Caco-2 (cell line): ENCODE measurements at regions of chr4 and their contacts with region 1.

Region 1: GRCh38 chr4:86895692-86896488 is 3.7 kb upstream of the C4orf36 start:
- DNase-seq: peak in 1 of 2 experiments; percentile 61
- H3K4me3 ChIP-seq: no peak overlapping the region
- H3K4me3 Mint-ChIP-seq: no peak overlapping the region
- H3K27ac Mint-ChIP-seq: no peak overlapping the region
- H3K4me1 ChIP-seq: no peaks in the 10 kb centered on the region
- H3K4me1 Mint-ChIP-seq: peaks cover 6% of the 10 kb centered on the region
- H3K27me3 ChIP-seq: no peaks in the 10 kb centered on the region
- H3K27me3 Mint-ChIP-seq: no peaks in the 10 kb centered on the region
- CTCF ChIP-seq: peak; percentile 52 to 59

Region 2: DNA sequence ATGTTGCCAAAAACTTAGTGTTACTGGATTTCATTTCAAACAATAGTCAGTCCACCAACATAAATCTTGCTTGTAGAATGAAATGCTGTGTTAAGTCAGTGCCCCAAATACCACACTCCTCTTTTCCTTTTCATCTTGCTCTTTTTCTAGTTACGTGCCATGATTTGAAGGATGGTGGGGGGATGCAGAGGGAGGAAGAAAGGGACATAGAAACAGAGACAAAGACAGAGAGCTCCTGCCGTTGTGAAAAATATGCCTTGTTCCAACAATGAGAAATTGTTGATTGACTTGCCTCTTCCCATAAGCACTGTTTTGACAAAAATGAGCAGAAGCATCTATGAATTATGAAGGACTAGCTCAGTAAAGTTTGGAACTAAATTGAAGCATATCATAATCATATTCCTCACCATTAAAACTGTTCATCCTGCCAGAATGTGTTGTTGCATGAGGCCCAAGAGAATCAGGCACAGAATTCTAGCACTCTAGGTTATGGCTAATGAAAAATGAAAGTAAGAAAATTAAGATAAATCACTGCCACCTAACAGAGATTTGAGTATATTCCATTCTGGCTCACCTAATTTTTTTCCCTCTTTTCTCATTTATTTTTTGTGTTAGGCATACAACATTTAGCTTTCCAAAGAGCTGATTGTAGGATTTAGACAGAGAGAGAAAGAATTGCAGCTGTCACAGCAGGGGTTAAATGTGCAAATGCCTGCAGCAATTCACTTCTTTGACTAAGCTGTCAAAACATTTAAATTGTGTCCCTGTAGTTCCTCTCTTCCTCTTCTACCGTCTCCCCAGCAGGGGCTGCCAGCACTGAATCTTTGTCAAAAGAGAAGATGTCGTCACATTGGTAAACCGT is 413.3 kb before region 1 on chr4:
- CTCF ChIA-PET with region 1: no interaction called
- POLR2A ChIA-PET with region 1: no interaction called
- intact Hi-C with region 1: no loop called
- DNase-seq: peak in 1 of 2 experiments; percentile 3
- H3K4me3 ChIP-seq: no peak overlapping the region
- H3K4me3 Mint-ChIP-seq: no peak overlapping the region
- H3K27ac Mint-ChIP-seq: no peak overlapping the region
- H3K4me1 ChIP-seq: no peaks in the 10 kb centered on the region
- H3K4me1 Mint-ChIP-seq: no peaks in the 10 kb centered on the region
- H3K27me3 ChIP-seq: no peaks in the 10 kb centered on the region
- H3K27me3 Mint-ChIP-seq: peaks cover 4% of the 10 kb centered on the region
- CTCF ChIP-seq: peak in 1 of 2 experiments; percentile 32

Region 3: DNA sequence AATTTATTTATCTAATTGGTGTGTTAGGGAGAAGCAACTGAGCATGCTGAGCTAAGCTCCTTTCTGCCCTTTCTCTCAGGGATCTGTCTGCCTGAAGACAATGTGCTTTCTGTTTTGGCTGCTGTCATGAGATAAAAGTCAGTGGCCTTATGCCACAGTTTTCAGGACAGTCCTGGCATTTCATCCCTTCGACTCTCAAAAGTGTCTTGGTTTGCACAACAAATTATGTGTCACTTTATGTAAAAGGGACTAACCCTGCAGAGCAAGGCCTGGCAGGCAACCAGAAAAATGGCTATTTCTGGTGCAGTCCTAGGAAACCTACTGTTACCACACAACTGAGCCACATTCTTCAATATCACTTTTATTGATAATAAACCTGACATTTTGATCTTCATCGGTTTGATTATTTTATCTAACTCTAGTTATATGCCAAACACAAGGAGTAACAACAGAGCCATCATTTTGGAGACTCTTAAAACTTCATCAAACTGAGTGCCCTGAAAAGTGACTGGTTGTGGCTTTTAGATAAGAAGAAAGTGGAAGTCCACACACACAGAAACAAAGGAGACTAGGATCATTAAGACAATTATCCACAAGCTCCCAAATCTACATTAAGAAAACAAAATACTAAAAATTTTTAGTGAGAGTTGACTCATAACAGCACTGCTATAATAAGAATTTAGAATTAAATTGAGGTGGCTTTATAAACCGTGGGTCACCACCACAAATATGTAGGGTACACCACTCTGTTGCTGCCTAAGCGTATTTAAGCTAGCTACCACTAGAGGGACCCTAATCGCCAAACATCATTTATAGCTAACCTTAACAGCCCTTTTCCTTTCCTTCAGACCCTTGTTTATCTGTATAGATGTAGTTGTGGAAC is 397.7 kb before region 1 on chr4:
- CTCF ChIA-PET with region 1: interaction called, 10 read pairs
- POLR2A ChIA-PET with region 1: no interaction called
- intact Hi-C with region 1: loop called (anchors 1 kb)
- DNase-seq: peak in 1 of 2 experiments; percentile 35
- H3K4me3 ChIP-seq: no peak overlapping the region
- H3K4me3 Mint-ChIP-seq: no peak overlapping the region
- H3K27ac Mint-ChIP-seq: no peak overlapping the region
- H3K4me1 ChIP-seq: peaks cover 5% of the 10 kb centered on the region; the same call in 1 of the 2 replicates
- H3K4me1 Mint-ChIP-seq: peaks cover 7% of the 10 kb centered on the region
- H3K27me3 ChIP-seq: no peaks in the 10 kb centered on the region
- H3K27me3 Mint-ChIP-seq: no peaks in the 10 kb centered on the region
- CTCF ChIP-seq: peak; percentile 71 to 75

Region 4: GRCh38 chr4:86653237-86653865 is 242.5 kb before region 1 on chr4:
- CTCF ChIA-PET with region 1: no interaction called
- POLR2A ChIA-PET with region 1: no interaction called
- intact Hi-C with region 1: loop called (anchors 1 kb)
- DNase-seq: peak in 1 of 2 experiments; percentile 32
- H3K4me3 ChIP-seq: no peak overlapping the region
- H3K4me3 Mint-ChIP-seq: no peak overlapping the region
- H3K27ac Mint-ChIP-seq: no peak overlapping the region
- H3K4me1 ChIP-seq: no peaks in the 10 kb centered on the region
- H3K4me1 Mint-ChIP-seq: no peaks in the 10 kb centered on the region
- H3K27me3 ChIP-seq: no peaks in the 10 kb centered on the region
- H3K27me3 Mint-ChIP-seq: no peaks in the 10 kb centered on the region
- CTCF ChIP-seq: peak; percentile 7 to 31

Region 5: DNA sequence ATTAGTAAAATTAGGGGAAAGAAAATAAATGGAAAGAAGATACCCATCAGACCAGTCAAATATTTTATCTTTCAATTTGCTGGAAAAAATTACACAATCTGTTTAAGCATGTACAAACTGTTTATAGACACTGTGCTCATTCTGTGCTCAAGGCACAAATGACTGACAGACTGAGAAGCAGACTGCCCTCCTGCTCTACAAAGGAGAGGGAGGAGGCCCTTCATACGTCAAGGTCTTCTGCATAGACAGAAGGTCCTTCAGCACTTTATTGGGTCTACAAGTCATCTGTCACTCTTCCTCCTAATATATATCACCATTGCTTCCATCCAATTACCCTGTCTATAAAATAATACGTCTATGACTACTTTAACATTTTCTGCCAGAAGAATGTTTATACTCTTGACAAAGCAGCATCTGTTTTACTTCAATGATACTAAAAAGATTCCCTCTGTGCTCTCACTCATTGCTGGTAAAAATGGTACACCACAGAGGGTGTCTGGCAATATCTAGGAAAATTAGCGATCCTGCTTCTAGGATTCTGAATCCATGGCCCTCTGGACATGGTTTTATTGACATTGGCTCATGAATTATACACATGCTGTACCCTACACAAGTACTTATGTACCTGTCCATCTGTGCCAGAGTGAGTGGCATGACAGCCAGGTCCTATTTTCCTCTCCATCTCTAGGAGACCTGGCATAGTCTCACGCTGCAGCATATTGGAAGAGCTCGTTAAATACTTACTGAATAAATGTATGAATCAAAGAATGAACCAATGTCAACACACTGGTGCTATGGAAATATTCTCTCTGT is 58.0 kb before region 1 on chr4:
- CTCF ChIA-PET with region 1: no interaction called
- POLR2A ChIA-PET with region 1: no interaction called
- intact Hi-C with region 1: no loop called
- DNase-seq: no peak
- H3K4me3 ChIP-seq: no peak overlapping the region
- H3K4me3 Mint-ChIP-seq: no peak overlapping the region
- H3K27ac Mint-ChIP-seq: no peak overlapping the region
- H3K4me1 ChIP-seq: no peaks in the 10 kb centered on the region
- H3K4me1 Mint-ChIP-seq: no peaks in the 10 kb centered on the region
- H3K27me3 ChIP-seq: no peaks in the 10 kb centered on the region
- H3K27me3 Mint-ChIP-seq: no peaks in the 10 kb centered on the region
- CTCF ChIP-seq: no peak

Region 6: DNA sequence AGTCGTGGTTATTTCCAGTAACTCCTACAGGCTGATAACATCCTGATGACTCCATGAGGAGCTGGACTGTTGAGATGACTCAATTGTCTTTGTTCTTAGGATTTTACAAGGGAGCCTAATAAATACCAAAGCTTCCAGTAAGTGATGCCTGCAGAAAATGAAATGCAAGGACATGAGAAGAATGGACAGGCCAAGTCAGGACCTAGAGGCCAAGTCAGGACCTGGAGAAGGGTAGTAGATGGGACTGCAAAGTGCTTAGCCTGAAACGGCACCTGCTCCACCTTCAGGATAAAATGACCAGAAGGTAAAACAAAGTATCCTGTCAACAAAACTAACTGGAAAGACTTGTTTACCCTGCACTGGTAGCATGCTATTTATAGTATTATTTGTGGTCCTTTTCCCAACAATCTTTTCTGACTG is 40.3 kb before region 1 on chr4:
- CTCF ChIA-PET with region 1: no interaction called
- POLR2A ChIA-PET with region 1: no interaction called
- intact Hi-C with region 1: loop called (anchors 5 kb)
- DNase-seq: peak in 1 of 2 experiments; percentile 30
- H3K4me3 ChIP-seq: no peak overlapping the region
- H3K4me3 Mint-ChIP-seq: no peak overlapping the region
- H3K27ac Mint-ChIP-seq: no peak overlapping the region
- H3K4me1 ChIP-seq: peaks cover 10% of the 10 kb centered on the region
- H3K4me1 Mint-ChIP-seq: peaks cover 7% of the 10 kb centered on the region
- H3K27me3 ChIP-seq: no peaks in the 10 kb centered on the region
- H3K27me3 Mint-ChIP-seq: no peaks in the 10 kb centered on the region
- CTCF ChIP-seq: no peak

Region 7: GRCh38 chr4:87150498-87151261 is 254.8 kb after region 1 on chr4:
- CTCF ChIA-PET with region 1: no interaction called
- POLR2A ChIA-PET with region 1: no interaction called
- intact Hi-C with region 1: loop called (anchors 1 kb)
- DNase-seq: peak; percentile 42 to 75
- H3K4me3 ChIP-seq: no peak overlapping the region
- H3K4me3 Mint-ChIP-seq: peak overlapping the region; percentile 19
- H3K27ac Mint-ChIP-seq: peak overlapping the region; percentile 21
- H3K4me1 ChIP-seq: peaks cover 8% of the 10 kb centered on the region
- H3K4me1 Mint-ChIP-seq: peaks cover 31% of the 10 kb centered on the region
- H3K27me3 ChIP-seq: no peaks in the 10 kb centered on the region
- H3K27me3 Mint-ChIP-seq: no peaks in the 10 kb centered on the region
- CTCF ChIP-seq: peak; percentile 78 to 88

Region 8: GRCh38 chr4:87353592-87353991 is 457.7 kb after region 1 on chr4:
- CTCF ChIA-PET with region 1: no interaction called
- POLR2A ChIA-PET with region 1: no interaction called
- intact Hi-C with region 1: no loop called
- DNase-seq: peak in 1 of 2 experiments; percentile 45
- H3K4me3 ChIP-seq: no peak overlapping the region
- H3K4me3 Mint-ChIP-seq: no peak overlapping the region
- H3K27ac Mint-ChIP-seq: no peak overlapping the region
- H3K4me1 ChIP-seq: peaks cover 9% of the 10 kb centered on the region; the same call in 1 of the 2 replicates
- H3K4me1 Mint-ChIP-seq: no peaks in the 10 kb centered on the region
- H3K27me3 ChIP-seq: no peaks in the 10 kb centered on the region
- H3K27me3 Mint-ChIP-seq: no peaks in the 10 kb centered on the region
- CTCF ChIP-seq: peak in 1 of 2 experiments; percentile 43